Activated CD8-positive, alpha-beta memory T cell treated with anti-CD3 and anti-CD28 coated beads, Interleukin-2, amount 10 ng/mL, durations not matched to agents 7 days and 5 days (primary cell): ENCODE measurements at regions of chr2 and their contacts with region 1.

Region 1: GRCh38 chr2:10122386-10123280 is at the start of gene RRM2:
- DNase-seq: peak; percentile 98
- ATAC-seq: peak; percentile 80
- H3K4me3 Mint-ChIP-seq: peak within 1 kb of the TSS; percentile 97
- H3K27ac Mint-ChIP-seq: peak within 1 kb of the TSS; percentile 99
- H3K4me1 Mint-ChIP-seq: peaks cover 55% of the 10 kb centered on the region
- H3K27me3 Mint-ChIP-seq: no peaks in the 10 kb centered on the region
- total RNA-seq, gene RRM2: 506 to 648 TPM

Region 2: DNA sequence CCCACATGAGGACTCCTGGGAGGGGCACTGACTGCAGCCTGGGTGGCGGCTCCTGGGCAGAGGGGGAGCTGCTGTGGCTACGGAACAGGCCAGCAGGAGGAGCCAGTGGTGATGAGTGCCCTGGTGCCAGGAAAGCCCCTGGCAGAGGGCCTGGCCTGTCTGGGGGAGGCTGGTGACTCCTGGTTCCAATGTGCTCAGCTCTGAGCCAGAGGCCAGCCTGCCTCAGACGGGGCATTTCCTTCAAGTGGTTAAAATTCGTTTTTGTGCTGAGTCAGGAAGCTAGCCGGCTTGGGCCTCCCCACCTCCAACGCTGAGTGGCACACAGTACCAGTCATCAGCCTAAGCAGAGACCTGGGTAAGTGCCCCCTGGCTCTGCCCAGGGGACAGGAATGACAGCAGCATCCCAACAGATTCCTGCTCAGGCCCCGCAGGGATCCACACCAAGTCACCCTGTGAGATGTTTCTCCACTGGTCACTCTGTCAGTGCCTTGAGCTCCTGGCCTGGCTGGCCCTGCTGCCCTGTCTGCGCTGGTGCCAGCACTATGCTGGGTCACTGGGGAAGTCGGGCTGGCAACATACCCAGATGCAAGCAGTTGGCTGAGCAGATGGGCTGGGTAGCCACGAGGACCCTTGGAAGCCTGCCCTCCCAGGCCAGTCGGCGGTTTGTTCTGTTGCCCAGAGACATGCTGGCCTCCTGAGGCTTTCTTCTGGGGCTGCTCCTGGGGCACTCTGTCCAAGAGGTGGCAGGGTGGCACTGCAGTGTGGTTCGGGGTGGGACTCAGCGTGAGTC is 86.3 kb before region 1 on chr2:
- CTCF ChIA-PET with region 1: no interaction called
- DNase-seq: no peak
- ATAC-seq: peak; percentile 57
- H3K4me3 Mint-ChIP-seq: no peak overlapping the region
- H3K27ac Mint-ChIP-seq: no peak overlapping the region
- H3K4me1 Mint-ChIP-seq: peaks cover 9% of the 10 kb centered on the region
- H3K27me3 Mint-ChIP-seq: peaks cover 8% of the 10 kb centered on the region

Region 3: GRCh38 chr2:10097352-10098148 is 25.1 kb before region 1 on chr2:
- CTCF ChIA-PET with region 1: interaction called, 14 read pairs
- DNase-seq: peak; percentile 52
- ATAC-seq: peak; percentile 82
- H3K4me3 Mint-ChIP-seq: no peak overlapping the region
- H3K27ac Mint-ChIP-seq: no peak overlapping the region
- H3K4me1 Mint-ChIP-seq: peaks cover 2% of the 10 kb centered on the region
- H3K27me3 Mint-ChIP-seq: peaks cover 37% of the 10 kb centered on the region

Region 4: GRCh38 chr2:10302479-10303180 is 180.0 kb after region 1 on chr2 and contains the start of gene HPCAL1:
- CTCF ChIA-PET with region 1: interaction called, 21 read pairs
- DNase-seq: peak; percentile 90
- ATAC-seq: peak; percentile 77
- H3K4me3 Mint-ChIP-seq: peak within 1 kb of the TSS; percentile 97
- H3K27ac Mint-ChIP-seq: peak within 1 kb of the TSS; percentile 76
- H3K4me1 Mint-ChIP-seq: peaks cover 62% of the 10 kb centered on the region
- H3K27me3 Mint-ChIP-seq: no peaks in the 10 kb centered on the region
- total RNA-seq, gene HPCAL1: 29.0 to 47.0 TPM

Region 5: DNA sequence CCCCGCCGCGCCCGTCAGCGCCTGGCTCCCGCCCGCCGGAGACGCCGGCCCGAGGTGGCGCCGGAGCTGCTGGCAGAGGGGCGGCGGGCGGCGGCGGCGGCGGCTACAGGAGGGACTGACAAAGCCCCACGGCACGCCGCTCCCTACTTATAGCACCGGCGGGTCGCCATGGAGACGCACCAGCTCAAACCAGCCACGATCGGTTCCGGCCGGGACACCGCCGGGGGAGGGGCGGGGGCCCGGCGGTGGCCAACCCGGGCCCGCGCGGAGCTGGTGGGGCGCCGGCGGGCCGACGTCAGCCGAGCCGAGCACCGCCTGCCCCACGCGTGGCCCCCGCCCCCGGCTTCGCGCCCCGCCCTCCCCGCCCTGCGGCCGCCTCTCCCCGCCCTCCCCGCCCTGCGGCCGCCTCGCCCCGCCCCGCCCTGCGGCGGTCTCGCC is 325.6 kb after region 1 on chr2 and contains the start of gene ODC1:
- CTCF ChIA-PET with region 1: interaction called, 38 read pairs
- DNase-seq: peak; percentile 96
- ATAC-seq: peak; percentile 83
- H3K4me3 Mint-ChIP-seq: peak within 1 kb of the TSS; percentile 82
- H3K27ac Mint-ChIP-seq: peak within 1 kb of the TSS; percentile 86
- H3K4me1 Mint-ChIP-seq: peaks cover 42% of the 10 kb centered on the region
- H3K27me3 Mint-ChIP-seq: no peaks in the 10 kb centered on the region
- total RNA-seq, gene ODC1: 64.8 to 80.3 TPM